ENCODE measurements at regions of chr18 and their contacts with region 1.

Region 1: GRCh38 chr18:43587538-43588153 is 310.4 kb upstream of the SYT4 start:
- DNase-seq: no peak
- ATAC-seq: no peak
- H3K4me3 Mint-ChIP-seq: no peak overlapping the region
- H3K27ac Mint-ChIP-seq: no peak overlapping the region
- H3K4me1 Mint-ChIP-seq: no peaks in the 10 kb centered on the region
- H3K27me3 Mint-ChIP-seq: no peaks in the 10 kb centered on the region
- CTCF ChIP-seq: no peak

Region 2: DNA sequence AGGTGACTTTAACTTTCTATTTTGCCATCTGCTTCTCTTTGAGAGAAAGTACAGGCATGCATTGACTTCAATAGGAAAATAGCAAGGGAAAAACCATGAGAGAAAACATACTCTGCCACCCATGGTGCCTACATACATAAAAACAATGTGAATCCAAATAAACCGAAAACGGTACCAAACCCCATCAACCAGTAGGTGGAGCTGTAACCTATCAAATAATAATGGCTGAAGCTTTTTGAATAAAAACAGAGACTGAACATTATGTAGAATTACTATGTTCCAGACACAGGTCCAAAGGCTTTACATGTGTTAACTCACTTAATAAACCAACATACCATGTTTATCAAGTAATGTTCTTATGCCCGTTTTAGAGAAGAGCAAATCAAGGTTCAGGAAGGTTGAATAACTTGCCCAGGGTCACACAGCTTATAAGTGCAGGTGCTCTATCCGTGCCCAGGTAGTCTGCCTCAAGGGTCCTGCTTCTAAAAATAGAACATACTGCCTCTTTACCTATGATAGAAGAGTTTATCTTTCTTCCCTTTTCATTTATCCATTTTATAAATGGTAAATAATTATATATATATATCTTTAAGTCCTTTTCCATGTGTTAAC is 16.5 kb before region 1 on chr18:
- CTCF ChIA-PET with region 1: interaction called, 10 read pairs
- POLR2A ChIA-PET with region 1: no interaction called
- intact Hi-C with region 1: loop called (anchors 1 kb)
- DNase-seq: no peak
- ATAC-seq: no peak
- H3K4me3 Mint-ChIP-seq: no peak overlapping the region
- H3K27ac Mint-ChIP-seq: no peak overlapping the region
- H3K4me1 Mint-ChIP-seq: no peaks in the 10 kb centered on the region
- H3K27me3 Mint-ChIP-seq: peaks cover 1% of the 10 kb centered on the region
- CTCF ChIP-seq: no peak

Measured in activated B cell treated with CpG ODN at 0.5 μM for 24 hours (primary cell).